Activated CD8-positive, alpha-beta T cell treated with anti-CD3 and anti-CD28 coated beads, Interleukin-2, amount 10 ng/mL, durations not matched to agents 7 days and 5 days (primary cell): ENCODE measurements at regions of chr7 and their contacts with region 1.

Region 1: GRCh38 chr7:1193593-1194424 is 33.8 kb upstream of the ZFAND2A start:
- DNase-seq: peak; percentile 59
- ATAC-seq: peak; percentile 77
- H3K4me3 Mint-ChIP-seq: no peak overlapping the region
- H3K27ac Mint-ChIP-seq: no peak overlapping the region
- H3K4me1 Mint-ChIP-seq: peaks cover 36% of the 10 kb centered on the region
- H3K27me3 Mint-ChIP-seq: peaks cover 9% of the 10 kb centered on the region

Region 2: DNA sequence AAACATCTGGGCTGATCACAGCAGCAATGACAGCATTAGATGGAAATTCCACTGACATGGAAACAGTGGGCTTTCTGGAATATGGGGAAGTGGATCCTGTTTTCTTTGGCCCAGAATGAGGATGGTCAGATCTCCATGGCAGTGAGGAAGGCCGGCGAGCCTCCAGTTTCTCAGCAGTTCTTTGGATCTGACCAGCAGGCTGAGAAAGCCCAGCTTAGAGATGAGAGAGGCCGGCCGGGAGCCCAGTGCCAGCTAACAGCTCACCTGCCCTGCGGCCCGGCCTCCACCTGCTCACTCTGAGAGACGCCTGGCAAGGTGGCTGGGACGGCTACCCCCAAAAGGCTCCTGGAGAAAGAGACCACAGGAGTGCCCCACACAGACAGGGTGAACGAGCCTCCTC is 81.7 kb before region 1 on chr7:
- CTCF ChIA-PET with region 1: no interaction called
- POLR2A ChIA-PET with region 1: no interaction called
- DNase-seq: no peak
- ATAC-seq: no peak
- H3K4me3 Mint-ChIP-seq: no peak overlapping the region
- H3K27ac Mint-ChIP-seq: no peak overlapping the region
- H3K4me1 Mint-ChIP-seq: no peaks in the 10 kb centered on the region
- H3K27me3 Mint-ChIP-seq: no peaks in the 10 kb centered on the region

Region 3: DNA sequence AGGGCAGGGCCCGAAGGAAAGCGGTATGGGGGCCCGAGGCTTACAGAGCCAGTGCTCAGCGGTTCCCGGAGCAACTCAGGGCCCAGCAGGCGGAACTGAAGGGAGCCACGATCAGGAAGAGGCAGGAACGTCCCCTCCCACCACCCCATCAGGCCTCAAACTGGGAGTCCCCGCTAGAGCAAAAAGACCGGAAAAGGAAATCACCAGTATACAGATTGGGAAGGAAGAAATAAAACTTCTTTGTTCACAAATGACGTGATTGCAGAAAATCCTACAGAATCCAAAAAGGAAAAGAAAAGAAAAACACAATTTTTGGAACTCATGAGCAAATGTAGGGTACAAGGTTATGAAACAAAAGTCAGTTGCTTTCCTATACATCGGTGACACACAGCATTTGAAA is 12.2 kb before region 1 on chr7:
- CTCF ChIA-PET with region 1: interaction called, 68 read pairs
- POLR2A ChIA-PET with region 1: interaction called, 3 read pairs
- DNase-seq: no peak
- ATAC-seq: no peak
- H3K4me3 Mint-ChIP-seq: no peak overlapping the region
- H3K27ac Mint-ChIP-seq: no peak overlapping the region
- H3K4me1 Mint-ChIP-seq: peaks cover 12% of the 10 kb centered on the region
- H3K27me3 Mint-ChIP-seq: peaks cover 11% of the 10 kb centered on the region

Region 4: GRCh38 chr7:1418505-1419309 is 224.9 kb after region 1 on chr7:
- CTCF ChIA-PET with region 1: interaction called, 10 read pairs
- POLR2A ChIA-PET with region 1: no interaction called
- DNase-seq: no peak
- ATAC-seq: no peak
- H3K4me3 Mint-ChIP-seq: no peak overlapping the region
- H3K27ac Mint-ChIP-seq: no peak overlapping the region
- H3K4me1 Mint-ChIP-seq: peaks cover 23% of the 10 kb centered on the region
- H3K27me3 Mint-ChIP-seq: peaks cover 20% of the 10 kb centered on the region

Region 5: GRCh38 chr7:1432411-1433082 is 238.7 kb after region 1 on chr7:
- CTCF ChIA-PET with region 1: interaction called, 21 read pairs
- POLR2A ChIA-PET with region 1: no interaction called
- DNase-seq: peak; percentile 85
- ATAC-seq: peak; percentile 78
- H3K4me3 Mint-ChIP-seq: no peak overlapping the region
- H3K27ac Mint-ChIP-seq: peak overlapping the region; percentile 37
- H3K4me1 Mint-ChIP-seq: peaks cover 4% of the 10 kb centered on the region
- H3K27me3 Mint-ChIP-seq: peaks cover 4% of the 10 kb centered on the region